ENCODE measurements at regions of chr6 and their contacts with region 1.

Region 1: GRCh38 chr6:117200067-117200466 is 65.3 kb upstream of the VGLL2 start:
- H3K4me3 ChIP-seq: no peak overlapping the region
- H3K27ac ChIP-seq: no peak overlapping the region
- H3K4me1 ChIP-seq: no peaks in the 10 kb centered on the region
- CTCF ChIP-seq: no peak

Region 2: DNA sequence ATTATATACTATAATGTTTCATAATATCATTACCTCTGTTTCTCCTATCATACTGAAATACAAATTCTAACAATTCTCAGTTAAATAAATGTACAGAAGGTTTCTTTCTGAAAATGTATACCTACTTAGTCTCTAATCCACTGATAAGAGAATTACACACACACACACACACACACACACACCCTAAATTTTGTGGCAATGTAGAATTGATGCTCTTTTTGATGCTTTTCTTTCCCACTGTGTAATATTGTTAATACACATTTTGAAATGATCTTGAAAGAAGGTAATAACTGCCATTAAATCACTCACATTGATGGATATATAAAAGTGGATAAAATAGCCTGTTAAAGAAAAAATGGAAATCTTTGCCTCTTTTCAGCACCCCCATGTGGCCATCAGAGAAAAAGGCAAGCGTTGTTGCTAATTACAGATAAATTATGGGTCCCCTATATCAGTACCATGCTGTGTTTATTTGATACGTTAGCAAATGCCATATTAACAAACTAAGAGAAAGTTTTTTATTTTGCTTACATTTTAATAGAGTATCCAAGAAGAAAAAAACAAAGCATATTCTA is 11.4 kb before region 1 on chr6:
- CTCF ChIA-PET with region 1: interaction called, 11 read pairs
- POLR2A ChIA-PET with region 1: no interaction called
- H3K4me3 ChIP-seq: no peak overlapping the region
- H3K27ac ChIP-seq: no peak overlapping the region
- H3K4me1 ChIP-seq: no peaks in the 10 kb centered on the region
- CTCF ChIP-seq: no peak

Region 3: GRCh38 chr6:117317261-117317660 is 117.2 kb after region 1 on chr6:
- CTCF ChIA-PET with region 1: no interaction called
- POLR2A ChIA-PET with region 1: no interaction called
- H3K4me3 ChIP-seq: no peak overlapping the region
- H3K27ac ChIP-seq: no peak overlapping the region
- H3K4me1 ChIP-seq: no peaks in the 10 kb centered on the region
- CTCF ChIP-seq: 0 out of 2 replicates have a peak, but pooled peaks have one; percentile 41

Measured in HEK293 (cell line).